Head of caudate nucleus (tissue), 42 donors: ENCODE measurements at regions of chr6 and their contacts with region 1.

Region 1: DNA sequence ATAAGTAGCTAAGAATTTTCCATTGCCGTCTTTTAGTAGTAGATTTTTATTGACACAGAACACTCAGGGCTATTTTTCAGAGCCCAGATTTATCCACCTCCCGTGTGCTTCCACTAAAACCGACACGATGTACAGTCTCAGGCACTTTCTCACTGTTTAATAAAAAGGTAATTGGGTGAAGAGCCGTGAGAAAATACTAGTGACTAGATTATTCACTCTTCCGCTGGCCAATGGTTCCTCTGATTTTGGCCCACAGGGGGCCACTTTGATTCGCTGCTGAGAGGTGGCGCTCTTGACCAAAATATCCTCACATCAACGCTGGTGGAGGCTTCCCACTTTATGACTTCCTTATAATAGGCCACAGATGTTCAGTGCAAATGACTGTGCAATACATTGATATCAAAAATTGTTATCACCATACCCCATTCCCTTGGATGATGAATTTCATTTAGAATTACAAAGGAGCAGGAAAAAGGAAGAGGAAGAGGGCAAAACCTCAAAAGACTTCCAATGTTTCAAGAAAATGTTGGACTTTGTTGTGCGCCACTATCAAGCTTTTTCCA is 12.3 kb upstream of the HDDC2 start:
- DNase-seq: peak; percentile 29 to 91 (median 70)

Region 2: GRCh38 chr6:125020385-125020784 is 293.7 kb before region 1 on chr6:
- intact Hi-C with region 1: no loop called
- DNase-seq: no peak

Region 3: DNA sequence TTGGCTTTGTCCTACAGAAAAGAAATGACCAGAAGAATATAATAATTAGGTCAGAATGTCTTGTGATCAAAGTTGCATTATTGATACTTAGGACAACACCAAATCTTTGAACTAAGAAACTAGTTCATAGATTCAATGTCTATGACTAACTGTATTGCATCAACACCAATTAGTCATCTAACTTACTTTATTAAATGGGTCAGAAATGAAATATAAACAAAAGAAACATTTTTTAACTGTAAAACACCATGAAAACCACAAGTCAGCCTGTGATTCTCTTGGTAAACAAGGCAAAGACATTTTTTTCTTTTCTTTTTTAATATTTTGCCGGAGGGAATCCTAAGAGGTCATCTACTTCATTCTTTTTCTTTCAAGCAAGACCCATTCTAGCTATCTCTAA is 101.8 kb after region 1 on chr6:
- intact Hi-C with region 1: no loop called
- DNase-seq: no peak

Region 4: GRCh38 chr6:125584468-125585029 is 270.4 kb after region 1 on chr6:
- intact Hi-C with region 1: loop called (anchors 5 kb)
- DNase-seq: peak; percentile 52 to 92 (median 80)

Region 5: GRCh38 chr6:125974214-125974866 is 660.2 kb after region 1 on chr6:
- intact Hi-C with region 1: loop called (anchors 10 kb)
- DNase-seq: no peak